Left lung (tissue), 14 donors: ENCODE measurements at regions of chr19 and their contacts with region 1.

Region 1: GRCh38 chr19:13277104-13277809 is 127.0 kb downstream of the IER2 start:
- DNase-seq: peak in 3 of 4 donors; percentile 43 to 70 (median 49)
- ATAC-seq: peak; percentile 97
- H3K4me3 ChIP-seq: no peak overlapping the region
- H3K27ac ChIP-seq: no peak overlapping the region
- H3K4me1 ChIP-seq: peaks cover 0 to 4% of the 10 kb centered on the region in 2 donors
- H3K27me3 ChIP-seq: peaks cover 0 to 19% of the 10 kb centered on the region in 2 donors
- CTCF ChIP-seq: peak; percentile 59 to 81

Region 2: GRCh38 chr19:13241231-13242104 is 35.8 kb before region 1 on chr19:
- intact Hi-C with region 1: no loop called
- DNase-seq: no peak
- ATAC-seq: no peak
- H3K4me3 ChIP-seq: no peak overlapping the region
- H3K27ac ChIP-seq: no peak overlapping the region
- H3K4me1 ChIP-seq: no peaks in the 10 kb centered on the region
- H3K27me3 ChIP-seq: no peaks in the 10 kb centered on the region
- CTCF ChIP-seq: no peak

Region 3: GRCh38 chr19:13356686-13357280 is 79.5 kb after region 1 on chr19:
- intact Hi-C with region 1: no loop called
- DNase-seq: no peak
- ATAC-seq: no peak
- H3K4me3 ChIP-seq: no peak overlapping the region
- H3K27ac ChIP-seq: no peak overlapping the region
- H3K4me1 ChIP-seq: no peaks in the 10 kb centered on the region
- H3K27me3 ChIP-seq: peaks cover 0 to 34% of the 10 kb centered on the region in 2 donors
- CTCF ChIP-seq: no peak

Region 4: DNA sequence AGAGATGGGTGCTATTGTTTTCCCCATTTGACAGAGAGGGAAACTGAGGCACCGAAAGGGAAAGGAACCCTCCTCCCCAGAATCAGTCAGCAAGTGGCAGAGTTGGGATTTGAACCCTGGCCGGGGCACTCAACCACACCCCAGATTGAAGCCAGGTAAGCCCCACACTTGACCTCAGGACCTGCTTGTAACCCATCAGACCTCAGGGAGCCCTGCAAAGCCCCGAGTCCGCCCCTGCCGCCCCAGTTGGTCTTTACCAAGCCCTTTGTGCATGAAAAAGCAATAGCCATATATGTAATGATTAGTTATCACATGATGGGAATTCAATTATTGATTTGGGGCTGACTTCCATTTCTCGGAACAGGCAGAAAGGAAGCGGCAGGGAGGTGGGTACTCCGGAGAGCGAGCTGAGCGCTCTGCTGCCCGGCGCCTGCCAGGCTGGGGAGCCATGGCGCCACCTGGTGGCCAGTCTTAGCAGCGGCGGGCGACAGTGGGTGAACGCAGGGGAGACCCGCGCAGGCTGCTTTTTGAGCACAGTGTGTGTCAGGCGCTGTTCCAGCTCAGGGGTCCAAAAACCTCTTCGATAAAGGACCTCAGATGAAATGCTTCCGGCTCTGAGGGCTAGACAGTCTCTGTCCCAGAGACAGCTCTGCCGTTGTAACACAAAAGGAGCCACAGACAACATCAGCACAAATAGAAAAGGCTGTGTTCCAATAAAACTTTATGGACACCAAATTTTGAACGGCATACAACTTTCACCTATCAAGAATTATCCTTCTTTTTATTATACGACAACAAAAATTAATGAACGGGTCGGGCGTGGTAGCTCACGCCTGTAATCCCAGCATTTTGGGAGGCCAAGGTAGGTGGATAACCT is 311.9 kb after region 1 on chr19:
- intact Hi-C with region 1: loop called in 1 of 2 experiments (anchors 5 kb)
- DNase-seq: peak; percentile 37 to 94 (median 64)
- ATAC-seq: peak; percentile 98
- H3K4me3 ChIP-seq: no peak overlapping the region
- H3K27ac ChIP-seq: no peak overlapping the region
- H3K4me1 ChIP-seq: peaks cover 0 to 4% of the 10 kb centered on the region in 2 donors
- H3K27me3 ChIP-seq: peaks cover 0 to 35% of the 10 kb centered on the region in 2 donors
- CTCF ChIP-seq: peak; percentile 97 to 98